Mammary epithelial cell (primary cell): ENCODE measurements at regions of chr5 and their contacts with region 1.

Region 1: DNA sequence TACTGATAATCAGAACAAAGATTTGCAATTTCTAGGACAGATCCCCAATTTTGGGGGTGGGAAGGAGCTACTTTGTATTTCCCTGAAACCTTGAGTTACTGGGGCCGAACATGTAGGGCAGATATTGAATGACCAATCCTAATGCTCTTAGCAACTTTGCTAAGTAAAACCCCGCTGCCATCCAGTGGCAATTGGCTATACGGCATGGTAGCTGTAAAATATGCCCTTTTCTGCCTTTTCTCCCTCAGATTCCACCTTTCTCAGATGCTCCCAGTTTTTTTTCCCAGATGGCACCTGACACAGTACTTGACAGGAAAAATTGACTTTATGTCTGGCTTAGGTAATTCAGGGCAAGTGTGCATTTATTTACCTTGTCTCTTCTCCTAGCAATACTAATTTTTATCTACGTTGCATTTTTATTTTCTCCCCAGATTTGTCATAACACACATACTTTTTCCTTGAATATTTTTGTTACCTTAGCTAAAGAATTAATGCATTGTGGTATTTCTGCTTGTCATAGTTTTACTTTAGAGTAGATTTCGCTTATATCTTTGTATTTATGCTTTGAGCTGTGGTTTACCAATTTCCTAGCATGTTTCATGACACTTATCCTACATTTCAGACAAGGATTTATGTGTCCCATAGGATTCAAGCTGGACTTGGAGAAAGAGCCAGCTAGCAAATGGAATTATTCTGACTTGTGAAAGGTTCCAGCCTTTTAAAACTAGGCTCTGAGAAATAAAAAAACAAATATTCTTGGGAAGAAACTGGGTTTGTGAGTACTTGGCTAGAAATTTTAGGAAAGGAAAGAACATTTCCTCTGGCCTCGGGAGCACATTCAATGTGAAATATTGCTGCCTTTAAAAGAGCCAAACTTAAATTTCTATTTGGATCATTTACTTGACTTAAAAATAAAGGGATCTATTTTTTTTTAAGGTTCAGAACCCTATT is 37.4 kb downstream of the PIK3R1 start:
- DNase-seq: peak; percentile 59
- H3K4me3 ChIP-seq: no peak overlapping the region
- H3K27ac ChIP-seq: peak overlapping the region; percentile 40
- H3K4me1 ChIP-seq: peaks cover 47% of the 10 kb centered on the region
- H3K27me3 ChIP-seq: no peaks in the 10 kb centered on the region
- CTCF ChIP-seq: peak; percentile 85 to 96

Region 2: DNA sequence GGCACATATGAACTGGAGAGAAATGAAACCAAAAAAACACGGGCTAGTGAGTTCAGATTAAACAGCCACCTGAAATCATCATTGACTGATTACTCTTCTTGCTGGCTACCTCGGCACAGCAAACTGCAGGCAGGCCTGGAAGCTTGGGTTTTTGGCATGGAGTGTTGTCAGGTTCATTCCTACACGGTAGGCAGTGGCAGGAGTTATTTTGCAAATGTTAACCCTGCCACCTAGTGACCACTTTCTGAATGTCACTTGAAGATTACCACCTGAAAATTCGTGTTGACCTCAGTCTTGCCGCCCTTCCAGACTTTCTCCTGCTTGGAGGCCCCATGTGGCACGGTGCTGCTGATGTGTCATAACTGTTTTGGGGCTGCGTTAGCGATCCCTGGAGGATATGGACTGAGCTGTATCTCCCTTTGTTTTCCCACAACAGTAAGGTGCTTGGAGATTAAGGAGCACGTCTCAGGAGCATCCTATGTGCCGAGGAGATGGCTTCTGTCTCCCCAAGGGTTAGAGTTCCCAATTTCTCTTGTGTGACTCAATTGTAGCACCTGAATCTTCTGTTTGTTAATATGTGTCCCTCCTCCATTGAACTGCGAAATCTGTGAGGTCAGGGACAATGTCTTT is 1043.7 kb before region 1 on chr5:
- CTCF ChIA-PET with region 1: interaction called, 5 read pairs
- dilution Hi-C with region 1: no loop called
- in situ Hi-C with region 1: no loop called
- intact Hi-C with region 1: loop called (anchors 1 kb)
- DNase-seq: peak; percentile 84
- H3K4me3 ChIP-seq: no peak overlapping the region
- H3K27ac ChIP-seq: no peak overlapping the region
- H3K4me1 ChIP-seq: peaks cover 50% of the 10 kb centered on the region
- H3K27me3 ChIP-seq: no peaks in the 10 kb centered on the region
- CTCF ChIP-seq: peak; percentile 50 to 67

Region 3: GRCh38 chr5:67338421-67338820 is 914.5 kb before region 1 on chr5:
- CTCF ChIA-PET with region 1: no interaction called
- dilution Hi-C with region 1: no loop called
- in situ Hi-C with region 1: no loop called
- intact Hi-C with region 1: loop called (anchors 1 kb)
- DNase-seq: no peak
- H3K4me3 ChIP-seq: no peak overlapping the region
- H3K27ac ChIP-seq: no peak overlapping the region
- H3K4me1 ChIP-seq: no peaks in the 10 kb centered on the region
- H3K27me3 ChIP-seq: no peaks in the 10 kb centered on the region
- CTCF ChIP-seq: no peak

Region 4: GRCh38 chr5:67493676-67494075 is 759.3 kb before region 1 on chr5:
- CTCF ChIA-PET with region 1: no interaction called
- dilution Hi-C with region 1: no loop called
- in situ Hi-C with region 1: loop called (anchors 25 kb)
- intact Hi-C with region 1: loop called (anchors 1 kb)
- DNase-seq: peak; percentile 31
- H3K4me3 ChIP-seq: no peak overlapping the region
- H3K27ac ChIP-seq: no peak overlapping the region
- H3K4me1 ChIP-seq: no peaks in the 10 kb centered on the region
- H3K27me3 ChIP-seq: no peaks in the 10 kb centered on the region
- CTCF ChIP-seq: peak; percentile 19 to 62

Region 5: DNA sequence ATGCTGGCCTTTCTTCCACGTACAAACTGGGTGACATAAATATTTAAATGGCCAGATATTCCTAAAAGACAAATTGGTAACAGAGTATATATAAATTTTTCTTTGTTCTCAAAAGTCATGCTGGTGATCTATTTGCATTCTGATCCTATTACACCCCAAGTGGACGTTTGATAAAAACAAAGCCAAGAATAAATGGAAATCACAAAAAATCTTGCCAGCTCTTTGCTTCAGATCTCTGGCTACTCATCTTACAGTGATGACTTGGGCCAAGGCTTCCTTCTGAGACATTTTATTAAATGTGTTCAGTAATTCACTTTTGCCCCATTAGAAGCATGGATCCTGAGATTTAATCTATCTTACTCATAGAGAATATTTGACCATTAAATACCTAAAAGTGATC is 481.7 kb before region 1 on chr5:
- CTCF ChIA-PET with region 1: no interaction called
- dilution Hi-C with region 1: no loop called
- in situ Hi-C with region 1: no loop called
- intact Hi-C with region 1: no loop called
- DNase-seq: no peak
- H3K4me3 ChIP-seq: no peak overlapping the region
- H3K27ac ChIP-seq: no peak overlapping the region
- H3K4me1 ChIP-seq: peaks cover 34% of the 10 kb centered on the region
- H3K27me3 ChIP-seq: no peaks in the 10 kb centered on the region
- CTCF ChIP-seq: no peak

Region 6: DNA sequence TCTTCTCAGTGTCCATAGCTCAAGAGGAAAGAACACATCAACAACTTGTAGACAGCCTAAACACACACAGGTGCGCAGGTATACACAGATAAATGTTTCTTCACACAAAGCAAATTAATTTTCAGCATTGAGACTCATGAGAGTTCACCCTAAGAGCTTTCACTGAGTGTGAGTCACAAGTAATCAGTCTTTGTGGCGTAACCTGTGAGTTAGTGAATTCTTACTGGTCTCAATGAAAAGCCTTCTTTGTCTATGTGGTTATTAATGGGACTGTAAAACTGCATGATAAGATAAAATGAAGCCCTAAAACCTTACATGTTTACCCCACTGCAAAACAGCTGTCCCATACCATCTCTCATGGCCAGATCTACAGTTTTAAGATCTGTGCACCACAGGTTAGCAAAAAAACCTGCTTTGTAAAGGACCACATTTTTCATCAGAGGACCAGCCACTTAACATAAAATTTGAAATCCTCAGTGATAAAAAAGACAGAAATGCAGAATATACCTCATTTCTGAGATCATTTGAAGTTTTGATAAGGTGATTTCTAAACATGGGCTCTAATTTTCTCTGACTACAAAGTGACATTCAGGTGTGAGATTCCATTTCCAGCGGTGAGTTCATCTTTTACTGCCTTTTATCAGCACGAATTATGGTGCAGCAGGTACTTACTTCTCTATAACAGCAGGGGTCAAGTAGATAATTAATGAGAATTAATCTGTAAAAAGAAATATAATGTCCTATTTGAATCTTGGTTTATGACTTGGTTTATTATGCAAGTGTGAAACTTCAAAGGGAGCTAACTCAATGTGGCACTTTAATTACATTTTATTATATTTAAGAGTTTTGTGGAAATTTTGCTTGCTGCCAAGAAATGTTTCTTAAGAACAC is 373.1 kb before region 1 on chr5:
- CTCF ChIA-PET with region 1: no interaction called
- dilution Hi-C with region 1: no loop called
- in situ Hi-C with region 1: no loop called
- intact Hi-C with region 1: loop called (anchors 10 kb)
- DNase-seq: peak; percentile 93
- H3K4me3 ChIP-seq: no peak overlapping the region
- H3K27ac ChIP-seq: peak overlapping the region; percentile 36
- H3K4me1 ChIP-seq: peaks cover 37% of the 10 kb centered on the region
- H3K27me3 ChIP-seq: no peaks in the 10 kb centered on the region
- CTCF ChIP-seq: no peak

Region 7: DNA sequence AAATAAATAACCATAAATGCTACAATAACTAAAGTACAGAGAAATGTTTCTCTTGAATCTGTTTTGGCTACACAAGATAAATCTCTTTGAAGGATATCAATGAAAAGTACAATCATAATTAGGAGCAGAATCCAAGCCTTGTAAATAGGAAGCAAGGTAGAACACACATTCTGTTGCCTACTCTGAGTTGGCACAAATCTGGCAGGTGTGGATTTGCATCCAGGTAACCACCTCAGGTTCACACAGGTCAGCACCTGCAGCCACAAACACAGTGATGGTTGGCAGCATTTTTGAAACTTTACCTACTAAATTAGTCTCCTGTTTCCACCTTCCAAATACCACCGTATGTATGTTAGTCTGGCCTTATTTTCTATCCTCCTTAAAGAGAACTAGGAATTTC is 142.7 kb before region 1 on chr5:
- CTCF ChIA-PET with region 1: no interaction called
- dilution Hi-C with region 1: no loop called
- in situ Hi-C with region 1: no loop called
- intact Hi-C with region 1: no loop called
- DNase-seq: no peak
- H3K4me3 ChIP-seq: no peak overlapping the region
- H3K27ac ChIP-seq: no peak overlapping the region
- H3K4me1 ChIP-seq: peaks cover 5% of the 10 kb centered on the region
- H3K27me3 ChIP-seq: no peaks in the 10 kb centered on the region
- CTCF ChIP-seq: no peak

Region 8: DNA sequence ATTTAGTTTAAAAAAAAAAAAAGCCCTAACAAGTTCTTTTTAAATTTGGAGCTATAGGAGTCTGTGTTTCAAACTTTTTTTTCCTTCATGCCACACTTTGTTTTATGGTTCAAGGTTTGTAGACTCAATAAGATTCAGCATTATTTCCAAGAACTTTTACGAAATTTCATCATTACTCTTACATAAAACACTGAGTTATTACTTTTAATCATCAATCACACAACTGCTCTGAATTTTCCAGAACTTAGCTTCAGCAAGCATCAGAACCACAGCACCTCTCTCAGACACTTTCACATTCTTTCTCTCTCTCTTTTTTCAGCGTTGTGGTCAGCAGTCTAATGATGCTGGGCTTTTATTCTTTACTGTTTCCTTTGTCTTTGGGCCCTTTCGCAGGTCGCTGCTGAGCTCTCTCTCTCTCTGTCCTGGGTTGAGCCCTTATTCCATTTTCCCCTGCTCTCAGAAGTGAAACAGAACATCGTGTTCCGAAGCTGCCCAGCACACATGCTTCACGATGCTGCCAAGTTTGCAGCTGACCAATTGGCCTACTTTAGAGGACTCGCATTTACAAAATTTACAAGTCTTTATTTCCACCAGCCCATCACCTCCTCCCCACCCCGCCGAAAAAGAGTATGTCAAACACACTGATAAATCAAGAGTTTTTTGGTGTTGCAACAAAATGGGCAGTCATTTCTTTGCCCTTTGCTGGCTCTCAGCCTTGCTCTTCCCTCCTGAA is 82.0 kb before region 1 on chr5:
- CTCF ChIA-PET with region 1: no interaction called
- dilution Hi-C with region 1: no loop called
- in situ Hi-C with region 1: no loop called
- intact Hi-C with region 1: no loop called
- DNase-seq: no peak
- H3K4me3 ChIP-seq: no peak overlapping the region
- H3K27ac ChIP-seq: no peak overlapping the region
- H3K4me1 ChIP-seq: no peaks in the 10 kb centered on the region
- H3K27me3 ChIP-seq: no peaks in the 10 kb centered on the region
- CTCF ChIP-seq: no peak

Region 9: GRCh38 chr5:68215208-68215897 is 37.6 kb before region 1 on chr5 and contains the start of gene PIK3R1:
- CTCF ChIA-PET with region 1: no interaction called
- dilution Hi-C with region 1: no loop called
- in situ Hi-C with region 1: no loop called
- intact Hi-C with region 1: loop called (anchors 1 kb)
- DNase-seq: peak; percentile 96
- H3K4me3 ChIP-seq: peak within 1 kb of the TSS; percentile 88 to 97 (median 91)
- H3K27ac ChIP-seq: peak within 1 kb of the TSS; percentile 77
- H3K4me1 ChIP-seq: peaks cover 20% of the 10 kb centered on the region
- H3K27me3 ChIP-seq: no peaks in the 10 kb centered on the region
- CTCF ChIP-seq: peak; percentile 22 to 42
- total RNA-seq, gene PIK3R1: 74.3 to 195 TPM

Region 10: GRCh38 chr5:69013481-69013880 is 760.5 kb after region 1 on chr5:
- CTCF ChIA-PET with region 1: no interaction called
- dilution Hi-C with region 1: no loop called
- in situ Hi-C with region 1: no loop called
- intact Hi-C with region 1: no loop called
- DNase-seq: no peak
- H3K4me3 ChIP-seq: no peak overlapping the region
- H3K27ac ChIP-seq: no peak overlapping the region
- H3K4me1 ChIP-seq: no peaks in the 10 kb centered on the region
- H3K27me3 ChIP-seq: no peaks in the 10 kb centered on the region
- CTCF ChIP-seq: no peak